ENCODE measurements at regions of chr3 and their contacts with region 1.

Region 1: GRCh38 chr3:34277110-34277509 is 478.7 kb downstream of the PDCD6IP start:
- DNase-seq: no peak
- H3K4me3 ChIP-seq: no peak overlapping the region
- H3K27ac ChIP-seq: peak overlapping the region; percentile 99
- H3K4me1 ChIP-seq: peaks cover 33% of the 10 kb centered on the region
- H3K27me3 ChIP-seq: no peaks in the 10 kb centered on the region
- CTCF ChIP-seq: no peak

Region 2: GRCh38 chr3:33915791-33916546 is 361.1 kb before region 1 on chr3:
- CTCF ChIA-PET with region 1: interaction called, 9 read pairs
- POLR2A ChIA-PET with region 1: interaction called, 3 read pairs
- intact Hi-C with region 1: loop called (anchors 1 kb)
- DNase-seq: peak; percentile 92
- H3K4me3 ChIP-seq: no peak overlapping the region
- H3K27ac ChIP-seq: peak overlapping the region; percentile 97
- H3K4me1 ChIP-seq: peaks cover 65% of the 10 kb centered on the region
- H3K27me3 ChIP-seq: no peaks in the 10 kb centered on the region
- CTCF ChIP-seq: peak; percentile 76

Region 3: DNA sequence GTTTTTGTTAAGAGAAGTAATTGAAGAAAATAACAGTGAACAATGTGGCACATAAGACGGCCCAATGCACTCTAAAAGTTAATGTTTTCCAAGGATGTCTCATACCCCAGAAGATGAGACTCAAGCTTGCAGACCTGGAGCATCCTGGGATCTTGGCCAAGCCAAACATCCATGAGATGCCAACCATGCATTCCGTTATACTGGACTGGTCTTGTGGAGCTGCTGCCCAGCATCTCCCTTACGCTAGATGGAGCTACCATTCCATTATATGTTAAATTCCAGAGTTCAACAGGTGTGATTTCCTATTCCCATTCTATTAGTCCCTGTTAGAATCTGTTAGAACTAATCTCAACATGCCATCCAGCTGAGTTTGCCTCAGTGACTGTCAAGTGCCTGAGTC is 296.9 kb before region 1 on chr3:
- CTCF ChIA-PET with region 1: interaction called, 3 read pairs
- POLR2A ChIA-PET with region 1: no interaction called
- intact Hi-C with region 1: loop called (anchors 1 kb)
- DNase-seq: peak; percentile 74
- H3K4me3 ChIP-seq: no peak overlapping the region
- H3K27ac ChIP-seq: no peak overlapping the region
- H3K4me1 ChIP-seq: peaks cover 5% of the 10 kb centered on the region
- H3K27me3 ChIP-seq: no peaks in the 10 kb centered on the region
- CTCF ChIP-seq: peak; percentile 72

Region 4: DNA sequence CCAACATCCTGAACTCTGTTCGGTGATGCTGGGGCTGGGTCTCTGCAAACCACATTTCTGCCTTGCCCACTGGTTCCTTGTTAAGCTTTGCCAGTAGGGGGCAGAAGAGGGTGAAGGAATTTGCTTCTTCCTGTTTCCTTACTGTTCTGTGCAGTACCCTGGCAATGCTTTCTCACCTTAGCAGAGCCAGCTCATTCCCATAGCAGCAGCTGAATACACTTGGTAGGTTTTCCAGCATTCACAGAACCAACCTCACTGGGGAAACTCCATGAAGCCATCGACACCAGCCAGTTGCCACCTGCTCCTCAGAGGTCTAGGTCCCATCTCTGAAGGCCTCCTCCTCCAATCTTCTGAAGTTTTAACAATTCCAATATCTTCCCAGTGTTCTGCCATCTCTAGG is 170.2 kb before region 1 on chr3:
- CTCF ChIA-PET with region 1: no interaction called
- POLR2A ChIA-PET with region 1: no interaction called
- intact Hi-C with region 1: loop called (anchors 2 kb)
- DNase-seq: peak; percentile 84
- H3K4me3 ChIP-seq: no peak overlapping the region
- H3K27ac ChIP-seq: peak overlapping the region; percentile 28
- H3K4me1 ChIP-seq: peaks cover 35% of the 10 kb centered on the region
- H3K27me3 ChIP-seq: no peaks in the 10 kb centered on the region
- CTCF ChIP-seq: peak; percentile 81

Region 5: DNA sequence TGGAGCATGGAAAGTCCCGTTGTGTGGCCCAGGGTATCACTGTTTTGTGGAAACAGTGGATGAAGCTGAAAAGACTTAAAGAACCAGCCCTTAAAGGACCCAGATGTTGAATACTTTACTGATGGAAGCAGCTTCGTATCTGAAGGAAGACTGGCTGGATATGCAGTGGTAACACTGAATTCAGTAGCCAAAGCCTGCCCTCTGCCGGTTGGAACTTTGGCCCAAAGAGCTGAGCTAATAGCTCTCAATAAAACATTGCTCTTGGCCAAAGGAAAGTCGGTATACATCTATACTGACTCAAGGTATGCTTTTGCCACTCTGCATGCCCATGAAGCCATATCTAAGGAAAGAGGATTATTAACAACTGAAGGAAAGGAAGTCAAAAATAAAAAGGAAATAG is 406.7 kb after region 1 on chr3:
- CTCF ChIA-PET with region 1: interaction called, 9 read pairs
- POLR2A ChIA-PET with region 1: no interaction called
- intact Hi-C with region 1: loop called (anchors 1 kb)
- DNase-seq: peak; percentile 88
- H3K4me3 ChIP-seq: no peak overlapping the region
- H3K27ac ChIP-seq: peak overlapping the region; percentile 71
- H3K4me1 ChIP-seq: peaks cover 18% of the 10 kb centered on the region
- H3K27me3 ChIP-seq: no peaks in the 10 kb centered on the region
- CTCF ChIP-seq: peak; percentile 71

Region 6: GRCh38 chr3:35946121-35946853 is 1669.2 kb after region 1 on chr3:
- CTCF ChIA-PET with region 1: no interaction called
- POLR2A ChIA-PET with region 1: no interaction called
- intact Hi-C with region 1: loop called (anchors 5 kb)
- DNase-seq: peak; percentile 79
- H3K4me3 ChIP-seq: peak overlapping the region; percentile 17
- H3K27ac ChIP-seq: peak overlapping the region; percentile 68
- H3K4me1 ChIP-seq: peaks cover 23% of the 10 kb centered on the region
- H3K27me3 ChIP-seq: no peaks in the 10 kb centered on the region
- CTCF ChIP-seq: peak; percentile 73

Measured in A673 (cell line).